Prostate gland (tissue), 2 donors: ENCODE measurements at regions of chr10 and their contacts with region 1.

Region 1: GRCh38 chr10:102352066-102352715 is 43.3 kb upstream of the NFKB2 start:
- DNase-seq: peak; percentile 35
- H3K4me3 ChIP-seq: no peak overlapping the region
- H3K27ac ChIP-seq: no peak overlapping the region
- H3K4me1 ChIP-seq: no peaks in the 10 kb centered on the region
- H3K27me3 ChIP-seq: no peaks in the 10 kb centered on the region
- CTCF ChIP-seq: peak; percentile 82 to 85 (median 83)
- POLR2A ChIP-seq: no peak

Region 2: DNA sequence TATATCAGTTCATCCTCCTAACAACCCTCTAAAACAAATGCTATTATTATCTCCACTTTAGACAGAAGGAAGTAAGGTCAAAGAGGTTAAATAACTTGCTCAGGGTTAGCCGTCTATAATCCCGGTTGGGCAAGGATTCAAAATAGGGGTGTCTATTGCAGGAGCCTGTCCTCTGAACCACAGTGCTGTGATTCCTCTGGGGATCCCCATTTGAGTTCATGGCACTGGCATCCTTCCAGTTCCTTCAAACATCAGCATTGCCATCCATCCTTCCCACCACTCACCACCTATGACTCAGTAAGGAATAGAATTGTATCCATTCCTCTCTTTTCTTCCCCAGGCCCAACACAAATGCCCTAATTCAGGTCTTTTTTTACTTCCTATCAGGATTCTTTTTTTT is 261.4 kb before region 1 on chr10:
- intact Hi-C with region 1: no loop called
- DNase-seq: no peak
- H3K4me3 ChIP-seq: no peak overlapping the region
- H3K27ac ChIP-seq: no peak overlapping the region
- H3K4me1 ChIP-seq: no peaks in the 10 kb centered on the region
- H3K27me3 ChIP-seq: no peaks in the 10 kb centered on the region
- CTCF ChIP-seq: no peak
- POLR2A ChIP-seq: no peak

Region 3: GRCh38 chr10:102167861-102168260 is 184.3 kb before region 1 on chr10:
- intact Hi-C with region 1: loop called (anchors 5 kb)
- DNase-seq: no peak
- H3K4me3 ChIP-seq: no peak overlapping the region
- H3K27ac ChIP-seq: no peak overlapping the region
- H3K4me1 ChIP-seq: no peaks in the 10 kb centered on the region
- H3K27me3 ChIP-seq: no peaks in the 10 kb centered on the region
- CTCF ChIP-seq: no peak
- POLR2A ChIP-seq: no peak

Region 4: GRCh38 chr10:102200751-102201640 is 151.2 kb before region 1 on chr10:
- intact Hi-C with region 1: no loop called
- DNase-seq: no peak
- H3K4me3 ChIP-seq: no peak overlapping the region
- H3K27ac ChIP-seq: no peak overlapping the region
- H3K4me1 ChIP-seq: no peaks in the 10 kb centered on the region
- H3K27me3 ChIP-seq: no peaks in the 10 kb centered on the region
- CTCF ChIP-seq: no peak
- POLR2A ChIP-seq: no peak

Region 5: GRCh38 chr10:102229810-102230263 is 122.4 kb before region 1 on chr10:
- intact Hi-C with region 1: loop called (anchors 2 kb)
- DNase-seq: peak; percentile 84
- H3K4me3 ChIP-seq: peak overlapping the region; percentile 27 to 40
- H3K27ac ChIP-seq: no peak overlapping the region
- H3K4me1 ChIP-seq: no peaks in the 10 kb centered on the region
- H3K27me3 ChIP-seq: no peaks in the 10 kb centered on the region
- CTCF ChIP-seq: peak; percentile 84 to 95 (median 92)
- POLR2A ChIP-seq: no peak

Region 6: DNA sequence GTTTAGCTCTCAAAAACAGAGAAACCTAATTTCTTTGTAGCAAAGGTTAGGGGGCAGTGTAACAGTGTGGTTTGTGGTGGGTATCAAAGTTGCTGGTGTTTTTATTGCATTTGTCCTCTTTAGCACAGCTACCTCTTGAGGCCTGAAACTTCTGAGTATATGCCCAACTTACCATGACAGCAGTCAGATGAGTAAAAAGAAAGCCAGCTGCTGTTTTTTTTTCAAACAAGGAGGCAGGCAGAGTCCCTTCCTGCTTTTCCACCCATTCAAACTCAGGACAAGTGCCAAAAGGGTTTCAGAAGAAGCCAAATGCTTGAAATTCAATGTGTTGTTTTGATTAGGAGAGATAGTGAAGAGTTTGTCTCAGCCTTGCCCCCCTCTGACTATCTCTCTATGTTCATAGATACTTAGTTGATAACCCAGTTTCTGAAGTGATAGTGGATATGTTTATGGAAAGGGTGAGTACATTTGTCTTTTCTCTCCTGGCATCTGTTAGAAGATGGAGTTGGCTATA is 83.8 kb before region 1 on chr10:
- intact Hi-C with region 1: no loop called
- DNase-seq: no peak
- H3K4me3 ChIP-seq: no peak overlapping the region
- H3K27ac ChIP-seq: no peak overlapping the region
- H3K4me1 ChIP-seq: no peaks in the 10 kb centered on the region
- H3K27me3 ChIP-seq: no peaks in the 10 kb centered on the region
- CTCF ChIP-seq: no peak
- POLR2A ChIP-seq: no peak

Region 7: DNA sequence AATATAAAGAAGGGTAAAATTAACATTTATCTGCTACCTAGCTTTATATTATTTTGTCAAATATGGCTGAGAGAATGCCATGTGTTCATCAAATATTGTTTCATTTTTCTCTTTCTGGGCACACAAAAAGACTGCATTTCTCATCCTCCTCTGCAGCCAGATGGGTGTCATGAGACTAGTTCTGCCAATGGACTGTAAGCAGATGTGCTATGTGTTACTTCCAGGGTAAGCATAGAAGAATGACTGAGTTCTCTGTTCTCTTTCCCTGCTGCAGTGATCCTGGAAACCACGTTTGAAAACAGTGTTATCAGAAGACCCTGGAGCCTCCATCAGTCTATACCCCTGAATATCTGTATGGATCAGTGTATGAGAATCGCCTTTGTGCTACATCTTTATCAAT is 1590.7 kb after region 1 on chr10:
- intact Hi-C with region 1: no loop called
- DNase-seq: no peak
- H3K4me3 ChIP-seq: no peak overlapping the region
- H3K27ac ChIP-seq: no peak overlapping the region
- H3K4me1 ChIP-seq: no peaks in the 10 kb centered on the region
- H3K27me3 ChIP-seq: no peaks in the 10 kb centered on the region
- CTCF ChIP-seq: no peak
- POLR2A ChIP-seq: no peak